ENCODE measurements at regions of chr3 and their contacts with region 1.

Region 1: DNA sequence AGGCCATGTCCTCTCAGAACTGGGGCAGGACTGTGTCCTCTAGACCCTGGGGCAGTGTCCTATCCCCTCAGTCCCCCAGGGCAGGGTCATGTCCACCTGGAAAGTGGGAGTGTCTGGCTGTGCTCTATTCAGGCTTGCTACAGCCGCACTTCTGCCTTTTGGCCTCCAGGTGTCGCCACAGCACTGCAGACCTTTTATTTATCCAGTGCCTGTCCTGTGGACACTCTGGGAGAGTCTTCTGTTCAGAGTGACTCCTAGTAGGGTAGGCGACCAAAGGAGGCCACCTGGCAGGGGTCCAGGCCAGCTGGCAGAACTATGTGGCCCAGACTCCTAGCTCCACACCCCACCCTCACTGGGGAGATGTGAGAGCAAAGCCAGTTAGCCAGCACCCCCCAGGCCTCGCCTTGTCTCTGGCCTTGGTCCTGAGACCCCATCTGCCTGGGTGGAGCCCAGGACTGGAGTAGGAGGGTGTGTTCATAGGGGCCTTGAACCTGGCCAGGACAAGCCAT is 3.9 kb downstream of the TMIE start:
- DNase-seq: peak; percentile 75
- ATAC-seq: peak; percentile 80 to 82

Region 2: DNA sequence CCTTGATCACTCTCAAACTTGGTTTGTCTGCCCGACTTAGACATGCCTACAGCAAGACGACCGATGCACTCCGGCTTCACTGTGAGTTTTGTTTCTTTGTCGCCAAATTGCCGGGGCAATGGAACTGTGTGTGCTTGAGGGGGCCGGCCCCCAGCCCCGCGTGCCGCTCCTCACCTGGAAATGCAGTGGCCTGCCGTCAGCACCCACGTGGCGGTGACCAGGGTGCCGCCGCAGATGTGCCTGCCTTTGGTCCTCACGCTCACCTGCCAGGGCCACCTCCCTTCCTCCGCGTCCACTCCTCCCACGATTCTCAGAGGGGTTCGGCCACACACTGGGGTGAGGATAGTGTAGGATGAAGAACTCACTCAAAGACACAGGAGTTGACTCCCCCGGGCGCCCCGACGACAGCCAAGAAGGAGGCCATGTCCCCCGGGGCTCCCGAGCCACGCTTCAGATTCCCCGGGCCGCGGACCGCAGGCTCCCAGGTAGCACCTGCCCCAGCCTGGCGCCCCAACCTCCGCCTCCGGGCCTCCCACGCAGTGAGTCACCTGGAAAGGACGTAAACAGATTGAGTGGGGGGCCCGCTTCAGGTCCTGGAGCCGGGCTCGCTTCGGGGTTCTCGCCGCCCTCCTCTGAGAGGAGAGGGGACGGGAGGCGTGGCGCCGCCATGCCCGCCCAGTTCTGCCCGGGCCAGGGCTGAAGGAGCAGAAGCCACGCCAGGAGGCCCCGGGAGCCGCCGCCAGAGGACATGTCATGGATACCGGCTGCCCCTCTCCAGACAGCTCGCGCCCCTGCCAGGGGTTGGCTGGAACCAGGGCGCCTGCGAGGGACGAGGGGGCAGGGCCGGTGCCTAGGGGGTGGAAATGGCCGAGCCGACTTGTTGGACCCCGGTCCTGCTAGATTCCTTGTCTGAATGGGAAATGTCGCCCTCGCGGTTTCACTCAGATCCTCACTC is 128.5 kb after region 1 on chr3:
- intact Hi-C with region 1: no loop called
- DNase-seq: no peak
- ATAC-seq: peak in 1 of 2 donors; percentile 16

Region 3: DNA sequence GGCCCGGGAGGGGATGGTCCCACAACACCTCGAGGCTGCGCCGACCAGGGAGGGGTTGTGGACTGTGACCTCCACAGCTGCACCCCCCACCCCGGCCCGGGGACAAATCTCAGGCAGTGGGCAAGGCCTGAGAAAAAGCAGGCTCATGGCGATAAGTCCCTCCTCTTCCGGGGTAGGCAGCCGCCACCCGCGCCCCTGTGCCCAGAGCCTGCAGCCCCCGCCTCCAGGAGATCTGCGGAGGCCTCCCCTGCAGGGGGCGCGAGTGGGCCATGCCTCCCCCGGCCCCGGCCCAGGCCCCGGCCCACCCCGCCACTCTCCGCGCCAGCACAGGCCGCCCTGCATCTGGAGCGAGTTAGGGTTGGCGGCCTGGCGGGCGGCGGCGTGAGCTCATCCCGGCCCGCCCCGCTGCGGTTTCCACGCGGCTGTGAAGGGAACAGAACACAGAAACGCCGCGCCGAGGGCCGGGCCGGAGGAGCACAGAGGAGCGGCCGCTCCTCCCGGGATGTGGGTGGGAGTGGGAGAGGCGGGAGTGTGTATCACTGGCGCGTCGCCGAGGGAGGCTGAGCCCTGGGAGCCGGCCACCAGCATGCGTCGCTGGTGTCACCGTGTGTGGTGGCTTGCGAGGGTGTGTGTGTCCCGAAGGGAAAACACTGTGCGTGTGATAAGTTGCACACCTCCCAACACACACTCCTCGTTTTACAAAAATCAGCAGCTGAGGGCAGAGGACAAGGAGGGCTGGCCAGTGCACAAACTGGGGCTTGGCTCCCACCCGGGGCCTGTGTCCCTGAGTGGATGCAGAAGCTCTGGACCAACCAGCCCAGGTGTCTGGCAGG is 140.9 kb after region 1 on chr3:
- intact Hi-C with region 1: loop called in 1 of 2 experiments (anchors 10 kb)
- DNase-seq: peak; percentile 81
- ATAC-seq: peak; percentile 85 to 87

Region 4: GRCh38 chr3:46895204-46895660 is 190.2 kb after region 1 on chr3:
- intact Hi-C with region 1: loop called (anchors 2 to 5 kb)
- DNase-seq: peak; percentile 84
- ATAC-seq: peak; percentile 42 to 56

Region 5: GRCh38 chr3:46909535-46910442 is 204.7 kb after region 1 on chr3:
- intact Hi-C with region 1: loop called in 1 of 2 experiments (anchors 5 kb)
- DNase-seq: peak; percentile 90
- ATAC-seq: peak; percentile 79 to 81

Region 6: DNA sequence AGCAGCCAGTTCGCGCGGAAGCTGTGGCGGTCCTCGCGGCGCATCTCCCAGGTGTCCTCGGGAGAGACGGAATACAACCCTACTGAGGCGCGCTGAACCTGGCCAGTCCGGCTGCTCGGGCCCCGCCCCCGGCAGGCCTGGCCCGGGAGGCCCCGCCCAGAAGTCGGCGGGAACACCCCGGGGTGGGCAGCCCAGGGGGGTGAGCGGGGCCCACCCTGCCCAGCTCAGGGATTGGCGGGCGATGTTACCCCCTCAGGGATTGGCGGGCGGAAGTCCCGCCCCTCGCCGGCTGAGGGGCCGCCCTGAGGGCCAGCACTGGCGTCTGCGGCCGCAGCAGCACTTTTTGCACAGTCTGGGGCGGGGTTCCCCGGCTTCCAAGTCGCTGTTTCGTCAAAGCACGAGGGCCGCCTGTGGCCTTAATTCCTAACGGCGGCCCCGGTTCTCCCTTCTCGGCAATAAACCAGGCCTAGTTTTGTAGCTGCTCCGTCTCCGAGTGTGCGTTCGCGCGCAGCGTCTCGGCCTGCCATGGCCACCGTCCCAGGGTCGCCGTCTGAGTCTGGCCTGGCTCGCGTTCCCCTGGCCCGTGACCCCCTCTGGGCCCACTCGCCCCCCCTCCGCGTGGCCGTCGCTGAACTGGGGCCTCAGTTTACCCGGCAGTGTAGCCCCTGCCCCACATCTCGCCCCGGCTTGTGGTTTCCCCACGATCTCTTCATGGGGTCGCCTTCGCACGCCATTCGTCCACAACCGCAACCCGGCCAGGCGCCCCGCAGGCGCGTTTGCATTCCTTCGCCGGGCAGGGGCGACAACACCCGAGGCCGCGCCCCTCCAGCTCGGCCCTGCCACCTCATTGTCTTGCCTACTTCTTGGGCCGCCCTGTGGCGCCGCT is 304.4 kb after region 1 on chr3:
- intact Hi-C with region 1: loop called in 1 of 2 experiments (anchors 10 kb)
- DNase-seq: peak; percentile 92
- ATAC-seq: peak; percentile 94 to 96

Measured in left cardiac atrium (tissue), 4 donors.